Caco-2 (cell line): ENCODE measurements at regions of chr11 and their contacts with region 1.

Region 1: GRCh38 chr11:19259487-19260345 is 19.0 kb upstream of the E2F8 start:
- DNase-seq: peak; percentile 62 to 73
- H3K4me3 ChIP-seq: no peak overlapping the region
- H3K4me3 Mint-ChIP-seq: no peak overlapping the region
- H3K27ac Mint-ChIP-seq: no peak overlapping the region
- H3K4me1 ChIP-seq: no peaks in the 10 kb centered on the region
- H3K4me1 Mint-ChIP-seq: peaks cover 7% of the 10 kb centered on the region
- H3K27me3 ChIP-seq: no peaks in the 10 kb centered on the region
- H3K27me3 Mint-ChIP-seq: no peaks in the 10 kb centered on the region
- CTCF ChIP-seq: peak; percentile 94 to 96

Region 2: GRCh38 chr11:19071255-19071654 is 188.5 kb before region 1 on chr11:
- CTCF ChIA-PET with region 1: interaction called, 6 read pairs
- POLR2A ChIA-PET with region 1: no interaction called
- intact Hi-C with region 1: loop called (anchors 1 kb)
- DNase-seq: peak; percentile 83 to 84
- H3K4me3 ChIP-seq: no peak overlapping the region
- H3K4me3 Mint-ChIP-seq: peak overlapping the region; percentile 29
- H3K27ac Mint-ChIP-seq: no peak overlapping the region
- H3K4me1 ChIP-seq: no peaks in the 10 kb centered on the region; the same call in 1 of the 2 replicates
- H3K4me1 Mint-ChIP-seq: peaks cover 15% of the 10 kb centered on the region
- H3K27me3 ChIP-seq: no peaks in the 10 kb centered on the region
- H3K27me3 Mint-ChIP-seq: peaks cover 8% of the 10 kb centered on the region
- CTCF ChIP-seq: peak; percentile 99

Region 3: DNA sequence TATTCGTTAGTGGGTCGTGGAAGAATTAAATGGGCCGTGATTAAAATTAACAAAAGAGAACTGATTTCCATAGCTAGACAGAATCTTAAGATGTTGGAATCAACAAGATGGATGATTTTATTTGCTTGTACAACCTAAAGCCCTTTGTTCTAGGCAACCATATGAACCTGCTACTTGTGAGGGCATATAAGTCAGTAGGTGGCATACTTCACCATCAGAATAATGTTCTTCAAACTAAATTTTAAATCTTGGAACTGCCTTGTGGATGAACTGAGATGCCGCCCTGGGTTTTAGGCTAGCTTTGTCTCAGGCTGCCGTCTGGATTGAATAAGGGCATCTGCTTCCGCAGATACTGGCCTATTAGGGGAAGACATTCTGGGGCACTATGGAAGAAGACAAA is 98.9 kb before region 1 on chr11:
- CTCF ChIA-PET with region 1: no interaction called
- POLR2A ChIA-PET with region 1: no interaction called
- intact Hi-C with region 1: loop called (anchors 1 kb)
- DNase-seq: no peak
- H3K4me3 ChIP-seq: no peak overlapping the region
- H3K4me3 Mint-ChIP-seq: no peak overlapping the region
- H3K27ac Mint-ChIP-seq: no peak overlapping the region
- H3K4me1 ChIP-seq: 0 out of 2 replicates have a peak, but pooled peaks cover 6% of the 10 kb centered on the region
- H3K4me1 Mint-ChIP-seq: peaks cover 17% of the 10 kb centered on the region
- H3K27me3 ChIP-seq: no peaks in the 10 kb centered on the region
- H3K27me3 Mint-ChIP-seq: no peaks in the 10 kb centered on the region
- CTCF ChIP-seq: peak in 1 of 2 experiments; percentile 17

Region 4: GRCh38 chr11:19220903-19221724 is 38.6 kb before region 1 on chr11:
- CTCF ChIA-PET with region 1: no interaction called
- POLR2A ChIA-PET with region 1: no interaction called
- intact Hi-C with region 1: loop called (anchors 1 kb)
- DNase-seq: peak in 1 of 2 experiments; percentile 38
- H3K4me3 ChIP-seq: no peak overlapping the region
- H3K4me3 Mint-ChIP-seq: peak overlapping the region; percentile 1
- H3K27ac Mint-ChIP-seq: peak overlapping the region; percentile 52
- H3K4me1 ChIP-seq: peaks cover 43% of the 10 kb centered on the region
- H3K4me1 Mint-ChIP-seq: peaks cover 36% of the 10 kb centered on the region
- H3K27me3 ChIP-seq: no peaks in the 10 kb centered on the region
- H3K27me3 Mint-ChIP-seq: no peaks in the 10 kb centered on the region
- CTCF ChIP-seq: no peak

Region 5: GRCh38 chr11:19246816-19247215 is 12.9 kb before region 1 on chr11:
- CTCF ChIA-PET with region 1: no interaction called
- POLR2A ChIA-PET with region 1: no interaction called
- intact Hi-C with region 1: no loop called
- DNase-seq: no peak
- H3K4me3 ChIP-seq: no peak overlapping the region
- H3K4me3 Mint-ChIP-seq: no peak overlapping the region
- H3K27ac Mint-ChIP-seq: no peak overlapping the region
- H3K4me1 ChIP-seq: peaks cover 38% of the 10 kb centered on the region
- H3K4me1 Mint-ChIP-seq: peaks cover 22% of the 10 kb centered on the region
- H3K27me3 ChIP-seq: no peaks in the 10 kb centered on the region
- H3K27me3 Mint-ChIP-seq: no peaks in the 10 kb centered on the region
- CTCF ChIP-seq: no peak

Region 6: DNA sequence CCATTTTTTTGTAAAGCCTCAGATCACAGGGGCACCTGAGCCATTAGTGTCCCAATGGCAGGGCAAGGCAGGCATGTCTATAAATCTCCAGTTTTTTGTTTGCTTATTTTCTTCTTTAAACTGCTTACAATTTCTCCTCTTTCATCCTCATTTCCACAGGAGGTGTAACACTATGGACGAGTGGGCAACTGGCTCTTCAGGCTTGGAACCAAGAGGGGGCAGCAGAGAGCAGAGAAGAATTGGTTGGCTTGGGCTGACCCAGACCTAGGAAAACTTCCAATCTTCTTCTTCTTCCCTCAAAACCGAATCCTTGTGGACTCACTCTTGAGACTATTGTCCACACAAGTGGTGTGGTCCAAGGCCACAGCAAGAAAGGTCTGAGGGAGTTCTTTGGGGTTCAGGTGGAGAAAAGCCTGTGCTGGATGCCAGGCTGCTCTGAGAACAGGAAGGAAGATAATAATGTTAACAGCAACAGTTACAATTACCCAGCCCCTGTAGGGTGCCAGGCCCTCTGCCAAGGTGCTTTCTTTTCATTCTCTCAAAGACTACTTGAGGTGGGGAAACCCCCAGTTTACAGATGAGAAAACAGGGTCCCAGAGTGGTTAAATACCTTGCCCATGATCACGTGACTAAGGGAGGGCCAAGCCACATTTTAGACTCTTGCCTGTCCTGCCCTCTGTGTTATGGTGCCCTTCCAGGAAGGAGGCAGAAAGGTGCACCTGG is 51.8 kb after region 1 on chr11:
- CTCF ChIA-PET with region 1: interaction called, 3 read pairs
- POLR2A ChIA-PET with region 1: no interaction called
- intact Hi-C with region 1: loop called (anchors 1 kb)
- DNase-seq: peak; percentile 56 to 83
- H3K4me3 ChIP-seq: no peak overlapping the region
- H3K4me3 Mint-ChIP-seq: no peak overlapping the region
- H3K27ac Mint-ChIP-seq: no peak overlapping the region
- H3K4me1 ChIP-seq: no peaks in the 10 kb centered on the region
- H3K4me1 Mint-ChIP-seq: no peaks in the 10 kb centered on the region
- H3K27me3 ChIP-seq: no peaks in the 10 kb centered on the region
- H3K27me3 Mint-ChIP-seq: no peaks in the 10 kb centered on the region
- CTCF ChIP-seq: peak; percentile 79 to 94

Region 7: DNA sequence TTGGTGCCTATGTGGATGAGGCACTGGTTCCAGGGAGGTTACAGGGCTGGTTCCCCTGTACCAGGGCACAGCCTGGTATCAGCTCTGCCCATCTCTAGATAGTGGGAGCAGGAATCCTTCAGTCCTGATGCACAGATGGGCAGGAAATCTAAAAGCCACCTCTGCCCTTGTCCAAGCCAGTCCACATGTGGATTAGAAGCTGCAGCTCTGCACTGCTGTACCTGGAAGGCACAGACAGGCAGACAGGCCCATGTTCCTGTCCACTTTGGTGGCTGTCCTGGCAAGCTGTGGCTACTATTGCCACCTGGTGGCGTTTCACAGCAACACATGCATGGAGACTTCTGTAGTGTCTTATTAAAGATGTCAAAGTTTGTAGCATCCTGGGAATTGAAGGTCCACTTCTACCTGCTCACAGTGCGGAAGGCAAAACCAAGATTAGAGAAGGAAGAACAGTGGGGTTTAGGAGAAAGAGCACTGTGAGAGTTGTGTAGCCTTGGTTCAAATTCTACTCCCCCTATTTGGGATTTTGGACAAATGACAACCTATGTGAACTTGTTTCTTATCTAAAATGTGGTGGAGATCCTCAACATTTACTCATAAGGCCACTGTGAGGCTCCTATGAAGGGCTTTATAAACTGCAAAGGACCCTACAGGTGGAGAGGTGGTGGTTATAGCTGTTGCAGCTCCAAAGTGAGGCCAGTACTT is 483.0 kb after region 1 on chr11:
- CTCF ChIA-PET with region 1: no interaction called
- POLR2A ChIA-PET with region 1: no interaction called
- intact Hi-C with region 1: loop called (anchors 10 kb)
- DNase-seq: peak; percentile 82 to 84
- H3K4me3 ChIP-seq: no peak overlapping the region
- H3K4me3 Mint-ChIP-seq: no peak overlapping the region
- H3K27ac Mint-ChIP-seq: no peak overlapping the region
- H3K4me1 ChIP-seq: no peaks in the 10 kb centered on the region
- H3K4me1 Mint-ChIP-seq: no peaks in the 10 kb centered on the region
- H3K27me3 ChIP-seq: no peaks in the 10 kb centered on the region
- H3K27me3 Mint-ChIP-seq: no peaks in the 10 kb centered on the region
- CTCF ChIP-seq: peak; percentile 77 to 86